ENCODE measurements at regions of chr19 and their contacts with region 1.

Region 1: GRCh38 chr19:2061495-2062381 is 10.7 kb upstream of the MKNK2 start:
- DNase-seq: peak; percentile 99

Region 2: GRCh38 chr19:2041683-2042484 is 19.9 kb before region 1 on chr19:
- CTCF ChIA-PET with region 1: no interaction called
- POLR2A ChIA-PET with region 1: interaction called, 11 read pairs
- DNase-seq: peak; percentile 95

Region 3: DNA sequence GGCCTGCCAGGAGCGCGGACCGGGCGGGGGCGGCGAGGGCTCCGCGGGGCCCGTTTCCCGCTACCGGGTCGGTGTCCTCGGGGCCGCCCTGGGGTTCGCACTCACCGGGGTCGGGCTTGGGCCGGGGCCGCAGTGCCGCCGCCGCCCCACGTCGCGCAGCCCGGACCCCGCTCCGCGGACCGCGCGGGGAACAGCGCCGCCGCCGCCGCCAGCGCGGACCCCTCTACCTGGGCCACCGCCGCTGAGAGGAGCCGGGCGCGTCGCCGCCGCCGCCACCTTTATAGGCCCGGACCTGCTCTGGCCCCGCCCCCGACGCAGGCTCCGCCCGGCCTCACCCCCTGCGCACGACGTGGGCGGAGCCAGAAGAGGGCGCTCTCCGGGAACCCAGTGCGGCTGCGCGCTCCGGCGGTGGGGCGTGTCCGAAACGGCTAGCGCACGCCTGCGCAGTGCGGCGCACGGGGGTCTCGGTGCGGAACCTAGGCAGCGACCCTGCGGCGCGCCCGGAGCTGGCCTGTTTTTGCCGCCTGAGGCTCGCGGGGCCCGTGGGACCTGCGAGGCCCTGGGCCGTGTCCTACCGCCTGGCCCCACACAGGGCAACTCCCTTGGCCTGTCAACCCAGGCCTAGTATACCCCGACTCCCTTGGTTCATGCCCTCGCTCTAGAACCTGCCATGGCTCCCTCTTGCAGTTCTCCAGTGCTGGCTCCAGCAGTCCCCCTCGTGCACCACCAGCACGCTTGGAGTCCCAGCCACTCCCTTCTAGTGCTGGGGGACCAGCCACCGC is 10.6 kb before region 1 on chr19 and contains the start of gene MKNK2:
- CTCF ChIA-PET with region 1: no interaction called
- POLR2A ChIA-PET with region 1: interaction called, 33 read pairs
- DNase-seq: peak; percentile 99